CD4-positive, alpha-beta memory T cell (primary cell): ENCODE measurements at regions of chr3 and their contacts with region 1.

Region 1: GRCh38 chr3:122415720-122416654 is at the start of gene WDR5B:
- DNase-seq: peak; percentile 98 to 99 (median 99)
- H3K4me3 ChIP-seq: peak within 1 kb of the TSS; percentile 61 to 63
- H3K4me3 Mint-ChIP-seq: peak within 1 kb of the TSS; percentile 96 to 100 (median 98)
- H3K27ac ChIP-seq: peak within 1 kb of the TSS; percentile 93
- H3K27ac Mint-ChIP-seq: peak within 1 kb of the TSS; percentile 97 to 100 (median 100)
- H3K4me1 ChIP-seq: peaks cover 35% of the 10 kb centered on the region
- H3K4me1 Mint-ChIP-seq: peaks cover 38 to 71% (median 49%) of the 10 kb centered on the region in 4 donors
- H3K27me3 ChIP-seq: no peaks in the 10 kb centered on the region
- H3K27me3 Mint-ChIP-seq: no peaks in the 10 kb centered on the region
- total RNA-seq, gene WDR5B: 19.2 to 19.4 TPM

Region 2: GRCh38 chr3:121749276-121750086 is 666.5 kb before region 1 on chr3 and contains the start of gene GOLGB1:
- CTCF ChIA-PET with region 1: no interaction called
- POLR2A ChIA-PET with region 1: interaction called, 3 read pairs
- intact Hi-C with region 1: loop called (anchors 1 kb)
- DNase-seq: peak; percentile 93 to 98 (median 97)
- H3K4me3 ChIP-seq: peak within 1 kb of the TSS; percentile 75 to 86
- H3K4me3 Mint-ChIP-seq: peak within 1 kb of the TSS in 2 of 8 donors; percentile 17 to 44
- H3K27ac ChIP-seq: peak within 1 kb of the TSS; percentile 99
- H3K27ac Mint-ChIP-seq: no peak within 1 kb of the TSS
- H3K4me1 ChIP-seq: peaks cover 34% of the 10 kb centered on the region
- H3K4me1 Mint-ChIP-seq: peaks cover 8 to 10% (median 9%) of the 10 kb centered on the region in 4 donors
- H3K27me3 ChIP-seq: no peaks in the 10 kb centered on the region
- H3K27me3 Mint-ChIP-seq: peaks cover 6 to 7% of the 10 kb centered on the region in 2 donors
- total RNA-seq, gene GOLGB1: 45.7 to 49.3 TPM

Region 3: DNA sequence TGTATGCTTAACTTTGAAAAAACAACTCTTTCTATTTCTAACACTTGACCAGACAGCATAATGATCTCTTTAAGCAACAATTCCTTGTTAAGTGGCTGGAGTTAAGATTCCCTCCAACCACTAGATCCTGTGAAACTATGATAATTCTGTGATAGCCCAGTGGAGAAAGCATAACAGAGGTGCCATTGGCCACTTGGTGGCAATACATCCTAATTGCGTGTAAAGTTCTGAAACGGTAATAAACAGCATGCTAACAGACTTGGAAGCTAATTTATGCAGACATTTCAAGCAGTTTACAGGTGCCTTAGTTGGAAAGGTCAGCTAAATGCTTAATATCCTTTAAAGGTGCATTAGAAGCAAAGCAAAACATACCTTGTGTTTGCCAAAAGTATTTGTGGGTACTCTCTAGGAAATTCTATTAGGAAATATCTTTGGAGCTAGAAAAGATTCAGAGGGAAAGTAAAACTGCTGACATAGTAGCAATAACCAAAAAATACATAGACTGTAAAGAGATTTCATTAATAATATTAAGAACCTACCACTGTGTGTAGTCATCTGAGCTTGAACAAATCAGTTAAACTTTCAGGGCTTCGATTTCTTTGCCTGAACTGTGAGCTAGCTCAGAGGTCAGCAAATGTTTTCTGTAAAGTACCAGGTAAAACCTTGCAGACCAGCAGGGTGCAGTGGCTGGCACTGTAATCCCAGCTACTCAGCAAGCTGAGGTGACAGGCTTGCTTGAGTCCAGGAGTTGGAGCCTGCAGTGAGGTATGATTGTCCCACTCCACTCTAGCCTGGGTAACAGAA is 110.0 kb before region 1 on chr3:
- CTCF ChIA-PET with region 1: no interaction called
- POLR2A ChIA-PET with region 1: no interaction called
- intact Hi-C with region 1: no loop called
- DNase-seq: no peak
- H3K4me3 ChIP-seq: no peak overlapping the region
- H3K4me3 Mint-ChIP-seq: no peak overlapping the region
- H3K27ac ChIP-seq: no peak overlapping the region
- H3K27ac Mint-ChIP-seq: no peak overlapping the region
- H3K4me1 ChIP-seq: no peaks in the 10 kb centered on the region
- H3K4me1 Mint-ChIP-seq: peaks cover 0 to 4% (median under 1%) of the 10 kb centered on the region in 4 donors
- H3K27me3 ChIP-seq: no peaks in the 10 kb centered on the region
- H3K27me3 Mint-ChIP-seq: peaks cover 0 to 3% of the 10 kb centered on the region in 2 donors

Region 4: GRCh38 chr3:122383771-122384697 is 32.0 kb before region 1 on chr3 and contains the start of gene FAM162A:
- CTCF ChIA-PET with region 1: interaction called, 33 read pairs
- POLR2A ChIA-PET with region 1: interaction called, 108 read pairs
- intact Hi-C with region 1: loop called (anchors 1 kb)
- DNase-seq: peak; percentile 92 to 93 (median 93)
- H3K4me3 ChIP-seq: peak within 1 kb of the TSS; percentile 72 to 84
- H3K4me3 Mint-ChIP-seq: peak within 1 kb of the TSS; percentile 89 to 96 (median 94)
- H3K27ac ChIP-seq: peak within 1 kb of the TSS; percentile 76
- H3K27ac Mint-ChIP-seq: peak within 1 kb of the TSS; percentile 93 to 98 (median 95)
- H3K4me1 ChIP-seq: peaks cover 31% of the 10 kb centered on the region
- H3K4me1 Mint-ChIP-seq: peaks cover 21 to 51% (median 36%) of the 10 kb centered on the region in 4 donors
- H3K27me3 ChIP-seq: no peaks in the 10 kb centered on the region
- H3K27me3 Mint-ChIP-seq: no peaks in the 10 kb centered on the region
- total RNA-seq, gene FAM162A: 31.1 to 32.8 TPM

Region 5: GRCh38 chr3:122427857-122428471 is 12.0 kb after region 1 on chr3:
- CTCF ChIA-PET with region 1: interaction called, 3 read pairs
- POLR2A ChIA-PET with region 1: interaction called, 22 read pairs
- intact Hi-C with region 1: no loop called
- DNase-seq: no peak
- H3K4me3 ChIP-seq: no peak overlapping the region
- H3K4me3 Mint-ChIP-seq: no peak overlapping the region
- H3K27ac ChIP-seq: no peak overlapping the region
- H3K27ac Mint-ChIP-seq: peak overlapping the region in 6 of 7 donors; percentile 5 to 70 (median 56)
- H3K4me1 ChIP-seq: no peaks in the 10 kb centered on the region
- H3K4me1 Mint-ChIP-seq: peaks cover 0 to 14% (median 5%) of the 10 kb centered on the region in 4 donors
- H3K27me3 ChIP-seq: no peaks in the 10 kb centered on the region
- H3K27me3 Mint-ChIP-seq: no peaks in the 10 kb centered on the region

Region 6: GRCh38 chr3:122564155-122564912 is 148.3 kb after region 1 on chr3 and contains the starts of genes DTX3L and PARP9:
- CTCF ChIA-PET with region 1: no interaction called
- POLR2A ChIA-PET with region 1: interaction called, 10 read pairs
- intact Hi-C with region 1: loop called (anchors 2 kb)
- DNase-seq: peak; percentile 79 to 87 (median 81)
- H3K4me3 ChIP-seq: peak within 1 kb of the TSS; percentile 78 to 94
- H3K4me3 Mint-ChIP-seq: peak within 1 kb of the TSS; percentile 92 to 98 (median 96)
- H3K27ac ChIP-seq: peak within 1 kb of the TSS; percentile 95
- H3K27ac Mint-ChIP-seq: peak within 1 kb of the TSS; percentile 90 to 99 (median 97)
- H3K4me1 ChIP-seq: peaks cover 70% of the 10 kb centered on the region
- H3K4me1 Mint-ChIP-seq: peaks cover 55 to 85% (median 70%) of the 10 kb centered on the region in 4 donors
- H3K27me3 ChIP-seq: no peaks in the 10 kb centered on the region
- H3K27me3 Mint-ChIP-seq: no peaks in the 10 kb centered on the region
- total RNA-seq, gene DTX3L: 49.3 to 51.0 TPM
- total RNA-seq, gene PARP9: 24.0 to 26.0 TPM

Region 7: DNA sequence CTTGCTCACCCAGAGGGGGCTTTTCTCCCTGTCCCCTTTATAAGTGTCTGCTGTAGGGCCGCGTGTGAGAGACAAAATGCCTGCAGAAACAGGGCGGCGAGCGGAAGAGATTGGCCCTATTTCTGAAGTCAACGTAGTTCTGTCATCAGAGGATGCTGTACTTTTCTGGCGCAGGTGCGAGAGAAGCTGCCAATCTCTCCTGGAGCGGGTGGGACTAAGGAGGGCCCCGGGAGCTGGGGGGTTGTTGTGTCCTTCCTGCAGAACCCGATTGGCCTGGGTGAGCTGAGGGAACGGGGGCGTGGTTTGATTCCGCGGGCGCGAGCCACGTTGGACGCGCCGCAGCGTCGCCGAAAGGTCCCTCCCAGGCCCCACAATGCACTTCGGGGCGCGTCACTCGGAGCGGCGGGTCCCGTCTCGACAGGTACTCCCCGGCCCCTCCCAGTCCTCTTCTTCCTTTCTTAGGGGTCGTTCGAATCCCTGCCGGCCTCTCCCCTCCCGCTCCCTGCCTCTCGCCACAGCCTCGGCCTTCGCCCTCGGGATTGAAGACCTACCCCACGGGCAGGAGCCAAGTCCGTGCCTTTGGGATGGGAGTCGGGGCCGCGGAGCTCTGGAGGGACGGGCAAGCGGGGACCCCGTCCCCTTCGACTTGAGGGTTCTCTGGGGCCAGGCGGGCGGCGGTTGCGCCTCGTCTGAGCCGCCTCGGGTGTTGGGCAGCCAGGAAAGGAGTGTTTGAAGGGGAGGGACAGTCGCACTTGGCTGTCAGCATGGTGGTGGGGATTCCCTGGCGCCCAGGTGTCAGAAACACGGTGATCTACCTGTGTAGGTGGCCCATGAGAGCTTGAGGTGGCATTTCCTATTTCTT is 785.8 kb after region 1 on chr3 and contains the start of gene SEC22A:
- CTCF ChIA-PET with region 1: no interaction called
- POLR2A ChIA-PET with region 1: interaction called, 6 read pairs
- intact Hi-C with region 1: loop called (anchors 1 kb)
- DNase-seq: peak; percentile 95 to 98 (median 98)
- H3K4me3 ChIP-seq: peak within 1 kb of the TSS; percentile 82 to 91
- H3K4me3 Mint-ChIP-seq: peak within 1 kb of the TSS; percentile 88 to 98 (median 90)
- H3K27ac ChIP-seq: peak within 1 kb of the TSS; percentile 98
- H3K27ac Mint-ChIP-seq: peak within 1 kb of the TSS; percentile 92 to 99 (median 98)
- H3K4me1 ChIP-seq: peaks cover 20% of the 10 kb centered on the region
- H3K4me1 Mint-ChIP-seq: peaks cover 21 to 38% (median 28%) of the 10 kb centered on the region in 4 donors
- H3K27me3 ChIP-seq: no peaks in the 10 kb centered on the region
- H3K27me3 Mint-ChIP-seq: peaks cover 0 to 4% of the 10 kb centered on the region in 2 donors
- total RNA-seq, gene SEC22A: 19.4 to 23.2 TPM